ENCODE measurements at regions of chr6 and their contacts with region 1.

Region 1: DNA sequence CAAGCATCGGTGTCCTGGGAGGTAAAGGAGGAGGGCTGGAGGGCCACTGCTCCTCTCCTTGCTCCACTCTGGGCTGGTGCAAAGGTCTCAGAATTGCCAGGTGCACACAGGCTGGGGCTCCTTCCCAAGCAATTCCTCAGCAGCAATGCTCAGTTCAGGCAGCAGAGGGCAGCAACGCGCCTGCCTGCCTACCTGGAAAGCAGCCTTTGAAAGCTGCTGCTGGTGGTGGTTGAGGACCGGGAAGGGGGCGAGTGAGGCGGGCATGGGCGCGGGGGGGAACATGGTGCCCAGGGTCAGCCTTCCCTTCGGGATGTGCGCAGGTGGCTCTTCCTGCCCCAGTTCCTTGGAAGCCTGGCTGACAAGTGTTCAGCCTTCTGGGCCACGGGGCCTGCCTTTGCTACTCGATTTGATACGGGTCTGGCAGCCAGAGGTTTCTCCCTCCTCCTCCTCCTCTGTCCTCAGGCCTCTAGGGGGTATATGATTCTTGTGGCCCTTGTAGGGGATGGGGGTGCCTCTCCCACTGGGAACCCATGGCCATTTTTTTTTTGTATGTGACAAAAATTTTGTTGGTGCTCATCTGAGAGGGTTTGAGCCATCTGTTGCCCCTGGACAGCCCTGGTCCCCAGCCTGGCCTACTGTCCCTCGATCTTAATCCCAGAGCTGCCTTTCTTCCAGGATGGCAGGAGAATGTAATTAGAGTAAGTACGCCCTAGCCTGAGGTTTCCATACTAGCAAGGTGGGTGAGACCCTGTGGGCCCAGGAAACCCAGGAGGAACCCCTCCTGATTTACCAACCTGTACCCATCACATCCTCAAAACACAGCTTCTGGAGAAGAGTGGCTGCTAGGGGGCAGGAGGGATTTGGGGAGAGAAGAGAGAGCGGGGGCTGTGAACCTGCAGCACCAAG is 20.1 kb downstream of the MRPS18A start:
- DNase-seq: no peak
- H3K4me3 ChIP-seq: no peak overlapping the region
- H3K27me3 ChIP-seq: no peaks in the 10 kb centered on the region
- CTCF ChIP-seq: peak; percentile 98

Region 2: GRCh38 chr6:43644931-43645612 is 22.4 kb before region 1 on chr6 and contains the start of gene RSPH9:
- CTCF ChIA-PET with region 1: interaction called, 50 read pairs
- POLR2A ChIA-PET with region 1: no interaction called
- DNase-seq: no peak
- H3K4me3 ChIP-seq: peak within 1 kb of the TSS; percentile 47
- H3K27me3 ChIP-seq: no peaks in the 10 kb centered on the region
- CTCF ChIP-seq: no peak
- polyA plus RNA-seq, gene RSPH9: 0.65 and 0.77 TPM in 2 replicates

Region 3: DNA sequence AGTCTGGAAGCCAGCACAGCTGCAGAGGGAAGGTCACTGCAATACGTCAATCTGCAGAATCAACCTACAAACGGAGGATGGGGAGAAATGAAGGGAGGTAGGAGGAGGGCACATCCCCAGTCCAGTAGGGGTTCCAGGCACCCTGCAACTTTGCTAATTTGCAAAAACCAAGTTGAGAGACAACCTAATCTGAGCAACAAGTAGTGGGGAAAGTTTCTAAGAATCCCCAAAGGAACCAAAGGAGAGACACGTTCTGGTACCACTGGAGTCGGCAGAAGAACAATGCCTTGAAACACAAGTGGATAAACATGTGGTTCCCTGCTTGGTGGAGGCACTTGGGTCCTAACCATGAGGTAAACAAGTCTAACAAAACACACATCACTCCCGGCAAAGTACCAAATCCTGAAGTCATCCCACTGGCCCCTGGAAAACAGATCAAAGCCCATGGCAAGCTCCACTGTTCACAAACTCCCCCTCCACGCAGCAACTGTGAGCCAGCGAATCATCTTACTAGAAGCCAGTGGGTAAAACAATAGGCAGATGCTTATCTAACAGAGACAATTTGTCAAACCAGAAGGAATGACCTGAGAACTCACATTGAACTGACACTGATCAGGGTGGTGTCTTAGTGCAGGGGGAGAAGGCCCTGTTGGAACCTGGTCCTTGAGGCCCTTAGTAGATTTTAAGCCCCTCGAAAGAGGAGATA is 15.4 kb after region 1 on chr6:
- CTCF ChIA-PET with region 1: interaction called, 35 read pairs
- POLR2A ChIA-PET with region 1: no interaction called
- DNase-seq: no peak
- H3K4me3 ChIP-seq: no peak overlapping the region
- H3K27me3 ChIP-seq: no peaks in the 10 kb centered on the region
- CTCF ChIP-seq: no peak

Region 4: DNA sequence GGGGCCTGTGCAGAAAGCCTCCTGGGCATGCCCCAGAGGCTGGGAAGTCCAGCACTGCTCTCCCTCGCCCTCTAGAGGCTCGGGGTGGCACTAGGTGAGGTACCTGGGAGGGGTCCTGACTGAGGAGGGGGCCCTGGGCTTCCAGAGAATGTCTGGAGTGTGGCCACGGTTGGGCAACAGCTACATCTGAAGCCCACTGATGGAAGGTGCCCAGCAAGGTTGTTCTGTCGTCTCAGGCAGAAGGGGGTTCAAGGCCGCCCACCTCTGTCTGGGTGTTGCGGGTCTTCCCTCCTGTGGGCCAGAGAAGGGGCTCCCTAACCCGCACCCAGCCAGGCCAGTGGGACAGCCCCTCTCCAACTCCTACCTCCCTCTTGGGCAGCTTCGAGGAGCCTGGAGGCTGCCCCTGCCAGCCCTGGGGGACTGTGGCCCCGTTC is 91.1 kb after region 1 on chr6:
- CTCF ChIA-PET with region 1: interaction called, 31 read pairs
- POLR2A ChIA-PET with region 1: no interaction called
- DNase-seq: no peak
- H3K4me3 ChIP-seq: no peak overlapping the region
- H3K27me3 ChIP-seq: peaks cover 23% of the 10 kb centered on the region
- CTCF ChIP-seq: peak; percentile 70

Region 5: DNA sequence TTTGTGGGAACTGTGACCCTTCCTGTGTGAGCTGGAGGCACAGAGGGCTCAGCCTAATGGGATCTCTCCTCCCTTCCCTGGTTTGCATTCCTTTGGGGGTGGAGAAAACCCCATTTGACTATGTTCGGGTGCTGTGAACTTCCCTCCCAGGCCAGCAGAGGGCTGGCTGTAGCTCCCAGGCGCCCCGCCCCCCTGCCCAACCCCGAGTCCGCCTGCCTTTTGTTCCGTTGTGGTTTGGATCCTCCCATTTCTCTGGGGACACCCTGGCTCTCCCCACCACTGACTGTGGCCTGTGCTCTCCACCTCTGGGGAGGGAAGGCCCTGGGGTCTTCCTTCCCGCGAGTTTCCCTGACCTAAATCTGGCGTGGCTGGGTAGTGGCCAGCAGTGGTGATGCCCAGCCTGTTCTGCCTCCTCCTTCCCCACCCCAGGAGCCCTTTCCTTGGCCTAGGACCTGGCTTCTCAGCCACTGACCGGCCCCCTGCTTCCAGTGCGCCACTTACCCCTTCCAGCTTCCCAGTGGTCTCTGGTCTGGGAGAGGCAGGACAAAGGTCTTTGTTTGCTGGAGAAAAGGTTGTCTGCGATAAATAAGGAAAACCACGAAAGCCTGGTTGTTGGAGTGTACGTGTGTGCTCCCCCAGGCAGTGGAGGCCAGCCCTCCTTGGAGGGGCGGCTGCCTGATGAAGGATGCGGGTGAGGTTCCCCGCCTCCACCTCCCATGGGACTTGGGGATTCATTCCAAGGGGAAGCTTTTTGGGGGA is 107.5 kb after region 1 on chr6:
- CTCF ChIA-PET with region 1: interaction called, 89 read pairs
- POLR2A ChIA-PET with region 1: interaction called, 3 read pairs
- DNase-seq: no peak
- H3K4me3 ChIP-seq: peak overlapping the region; percentile 94
- H3K27me3 ChIP-seq: no peaks in the 10 kb centered on the region
- CTCF ChIP-seq: peak; percentile 97